Activated CD4-positive, alpha-beta T cell treated with anti-CD3 and anti-CD28 coated beads, Interleukin-2, amount 10 ng/mL, durations not matched to agents 24 days and 14 days (primary cell): ENCODE measurements at regions of chr14 and their contacts with region 1.

Region 1: DNA sequence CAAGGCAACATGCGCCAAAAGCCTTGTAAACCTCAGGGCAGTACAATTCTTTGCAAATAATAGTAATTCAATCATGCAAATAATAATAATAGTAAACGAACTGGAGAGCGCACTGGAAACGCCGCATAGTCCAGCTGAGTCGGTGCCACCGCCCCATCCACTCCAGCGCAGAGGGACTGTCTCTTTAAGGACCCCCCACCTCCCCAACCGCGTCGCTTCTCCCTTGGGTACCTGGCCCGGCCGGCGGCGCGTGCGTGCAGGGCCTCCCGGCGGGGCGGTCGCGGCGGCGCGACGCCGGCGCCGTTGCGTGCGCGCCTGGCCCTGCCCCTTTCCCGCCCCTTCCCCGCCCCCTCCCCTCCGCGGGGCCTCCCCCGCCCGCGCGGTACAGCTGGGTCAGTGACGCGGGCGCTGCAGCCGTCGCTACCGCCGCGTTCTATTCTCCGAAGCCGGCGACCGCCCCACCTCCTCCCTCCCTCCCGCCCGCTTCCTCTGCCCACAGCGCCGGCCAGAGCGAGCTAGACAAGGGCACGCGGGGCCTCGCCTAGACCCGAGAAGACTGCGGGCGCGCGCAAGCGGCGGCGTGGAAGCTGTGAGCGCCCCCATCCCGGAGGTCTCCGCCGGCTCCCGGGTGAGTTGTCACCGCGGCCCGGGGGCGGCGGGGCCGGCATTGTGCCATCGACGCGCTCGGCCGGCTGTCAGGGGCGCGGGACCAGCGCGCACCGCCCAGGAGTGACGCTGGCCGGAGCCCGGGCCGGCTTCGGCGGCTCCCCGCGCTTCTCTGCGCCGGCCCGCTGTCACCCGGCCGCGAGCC is at the start of gene SUSD6:
- DNase-seq: peak; percentile 96
- H3K4me3 Mint-ChIP-seq: peak within 1 kb of the TSS; percentile 95
- H3K27ac Mint-ChIP-seq: peak within 1 kb of the TSS; percentile 97
- H3K4me1 Mint-ChIP-seq: peaks cover 65% of the 10 kb centered on the region
- H3K27me3 Mint-ChIP-seq: no peaks in the 10 kb centered on the region
- total RNA-seq, gene SUSD6: 73.4 and 78.9 TPM in 2 replicates

Region 2: DNA sequence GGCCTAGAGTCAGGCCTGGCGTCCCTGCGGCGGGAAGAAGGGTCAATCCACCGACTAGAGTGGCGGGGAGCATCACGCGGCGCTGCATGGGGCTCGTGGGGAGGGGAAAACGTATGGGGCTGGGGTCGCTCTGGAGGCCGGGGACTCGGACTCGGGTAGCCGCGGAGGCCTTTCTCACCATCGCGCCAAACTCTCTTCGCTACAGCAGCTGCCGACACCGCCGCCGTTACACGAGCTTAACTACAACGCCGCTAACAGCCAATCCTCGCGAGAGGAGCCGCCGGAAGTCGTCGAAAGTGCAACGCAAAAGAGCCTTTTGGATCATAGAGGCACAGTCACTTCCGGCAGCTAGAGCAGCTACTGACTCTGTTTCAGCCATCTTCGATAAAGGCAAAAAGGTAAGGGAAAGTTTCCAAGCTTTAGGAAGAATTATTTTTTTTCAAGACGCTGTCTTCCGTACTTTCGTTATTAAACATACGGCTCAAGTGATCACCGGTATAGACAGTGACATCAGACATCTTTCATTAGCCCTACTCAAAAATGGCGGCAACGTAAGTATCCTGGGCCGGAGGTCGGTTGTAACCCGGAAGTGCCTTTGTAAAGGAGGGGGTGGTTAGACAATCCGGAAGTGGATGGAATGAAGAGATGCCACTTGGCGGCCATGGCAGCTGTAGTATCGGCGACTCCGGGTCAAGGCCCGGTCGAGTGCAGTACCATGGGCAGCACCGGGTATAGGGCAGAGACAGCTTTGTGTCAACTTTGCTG is 213.2 kb before region 1 on chr14 and contains the starts of genes ERH and SLC39A9:
- intact Hi-C with region 1: loop called (anchors 10 kb)
- DNase-seq: peak; percentile 98
- H3K4me3 Mint-ChIP-seq: peak within 1 kb of the TSS; percentile 94
- H3K27ac Mint-ChIP-seq: peak within 1 kb of the TSS; percentile 98
- H3K4me1 Mint-ChIP-seq: peaks cover 49% of the 10 kb centered on the region
- H3K27me3 Mint-ChIP-seq: no peaks in the 10 kb centered on the region
- total RNA-seq, gene ERH: 434 and 441 TPM in 2 replicates
- total RNA-seq, gene SLC39A9: 49.5 and 53.4 TPM in 2 replicates

Region 3: DNA sequence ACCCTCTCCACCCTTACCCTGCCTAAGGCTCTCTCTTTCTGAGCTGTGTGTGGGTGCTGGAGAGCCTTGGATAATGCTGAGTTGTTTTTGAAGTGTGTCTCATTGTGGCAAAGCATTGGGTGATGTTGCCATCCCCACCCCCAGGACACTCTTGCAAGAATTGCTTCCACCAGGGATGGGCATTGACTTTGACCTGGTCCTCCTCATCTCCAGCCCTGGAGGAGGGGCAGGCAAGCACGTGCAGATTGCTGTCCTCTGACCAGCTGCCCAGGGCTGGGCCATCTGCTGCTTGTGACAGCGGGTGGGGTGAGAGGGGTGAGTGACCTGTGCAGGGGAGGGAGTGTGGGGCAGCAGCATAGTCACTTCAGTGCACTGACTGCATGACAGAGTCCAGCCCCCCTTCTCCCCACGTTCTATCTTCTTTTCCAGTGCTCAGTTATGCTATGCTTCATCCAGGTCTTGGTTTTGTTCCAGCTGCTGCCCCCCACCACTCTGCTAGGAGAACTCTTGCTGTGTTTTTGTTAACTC is 26.2 kb after region 1 on chr14:
- intact Hi-C with region 1: loop called (anchors 1 kb)
- DNase-seq: peak; percentile 64
- H3K4me3 Mint-ChIP-seq: peak overlapping the region; percentile 73
- H3K27ac Mint-ChIP-seq: peak overlapping the region; percentile 92
- H3K4me1 Mint-ChIP-seq: peaks cover 76% of the 10 kb centered on the region
- H3K27me3 Mint-ChIP-seq: no peaks in the 10 kb centered on the region

Region 4: DNA sequence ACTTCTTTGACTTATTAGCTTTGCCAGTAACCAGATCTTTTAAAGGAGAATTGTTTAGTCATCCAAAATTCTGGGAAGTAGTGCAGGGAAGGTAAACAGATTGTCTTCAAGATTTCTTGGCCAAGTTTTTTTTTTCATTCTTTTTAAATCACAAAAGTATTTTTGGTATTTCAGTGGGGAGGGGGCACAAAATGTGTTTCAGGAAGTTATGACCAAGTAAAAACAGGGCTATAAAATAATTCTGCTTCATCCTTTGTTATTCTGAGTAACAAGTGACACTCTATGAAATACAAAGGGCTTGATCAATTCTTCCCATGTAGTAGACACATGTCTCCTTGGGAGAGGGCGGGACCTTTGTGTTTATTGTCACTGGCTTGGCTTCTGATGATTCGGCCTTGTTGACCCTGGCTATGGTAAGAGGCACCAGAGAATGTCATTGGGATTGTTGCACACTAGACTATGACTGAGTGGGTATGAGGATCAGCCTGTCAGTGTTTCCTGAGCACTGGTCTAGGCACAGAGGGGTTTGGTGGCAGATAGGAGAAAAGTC is 55.4 kb after region 1 on chr14:
- intact Hi-C with region 1: no loop called
- DNase-seq: no peak
- H3K4me3 Mint-ChIP-seq: peak overlapping the region; percentile 57
- H3K27ac Mint-ChIP-seq: peak overlapping the region; percentile 79
- H3K4me1 Mint-ChIP-seq: peaks cover 77% of the 10 kb centered on the region
- H3K27me3 Mint-ChIP-seq: no peaks in the 10 kb centered on the region

Region 5: DNA sequence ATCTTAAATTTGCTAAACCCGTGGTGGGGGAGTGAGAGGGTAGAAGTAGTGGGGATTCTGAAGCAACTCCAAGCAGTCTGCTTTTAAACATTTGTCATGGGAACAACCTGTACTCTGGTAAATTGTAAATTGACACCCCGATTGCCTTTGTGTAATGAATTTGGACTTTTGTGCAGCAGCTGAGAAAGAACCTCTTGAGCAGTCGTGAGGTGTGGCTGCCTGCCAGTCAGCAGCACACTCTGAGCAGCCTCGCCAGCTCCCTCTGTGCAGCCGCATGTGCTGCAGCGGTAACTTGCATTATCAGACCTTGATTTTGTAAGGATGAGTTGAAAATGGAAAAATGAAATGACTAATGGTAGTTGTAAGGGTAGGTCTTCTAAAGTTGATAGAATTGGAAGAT is 74.3 kb after region 1 on chr14:
- intact Hi-C with region 1: loop called (anchors 1 kb)
- DNase-seq: peak; percentile 79
- H3K4me3 Mint-ChIP-seq: peak overlapping the region; percentile 75
- H3K27ac Mint-ChIP-seq: peak overlapping the region; percentile 96
- H3K4me1 Mint-ChIP-seq: peaks cover 79% of the 10 kb centered on the region
- H3K27me3 Mint-ChIP-seq: no peaks in the 10 kb centered on the region

Region 6: GRCh38 chr14:69726761-69727511 is 115.5 kb after region 1 on chr14:
- intact Hi-C with region 1: loop called (anchors 2 kb)
- DNase-seq: peak; percentile 96
- H3K4me3 Mint-ChIP-seq: peak overlapping the region; percentile 79
- H3K27ac Mint-ChIP-seq: peak overlapping the region; percentile 79
- H3K4me1 Mint-ChIP-seq: peaks cover 33% of the 10 kb centered on the region
- H3K27me3 Mint-ChIP-seq: peaks cover 7% of the 10 kb centered on the region